GM12878 (cell line): ENCODE measurements at regions of chr12 and their contacts with region 1.

Region 1: GRCh38 chr12:26514364-26514763 is 318.6 kb downstream of the ITPR2 start:
- DNase-seq: no peak
- ATAC-seq: peak; percentile 77
- H3K4me3 ChIP-seq: no peak overlapping the region
- H3K27ac ChIP-seq: no peak overlapping the region
- H3K4me1 ChIP-seq: no peaks in the 10 kb centered on the region
- H3K27me3 ChIP-seq: no peaks in the 10 kb centered on the region
- CTCF ChIP-seq: no peak
- EP300 ChIP-seq: no peak
- POLR2A ChIP-seq: no peak
- RAD21 ChIP-seq: no peak

Region 2: DNA sequence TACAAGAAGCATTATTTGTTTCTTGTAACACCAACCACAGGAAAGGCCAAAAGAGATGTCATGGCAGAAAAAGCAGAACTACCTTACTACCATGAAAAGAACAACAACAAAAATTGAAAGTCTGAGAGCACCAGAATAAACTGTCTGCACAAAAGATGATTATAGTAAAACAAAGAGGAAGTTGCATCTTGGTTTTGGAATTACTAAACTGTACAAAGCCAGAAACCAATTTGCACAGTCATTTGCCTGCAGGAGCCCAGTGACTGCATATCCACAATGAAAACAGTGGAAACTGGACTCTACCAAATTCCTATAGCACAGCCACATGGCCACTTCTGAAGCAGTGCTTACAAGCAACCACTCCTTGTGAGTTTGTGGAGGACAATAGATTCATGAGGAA is 42.8 kb before region 1 on chr12:
- CTCF ChIA-PET with region 1: no interaction called
- POLR2A ChIA-PET with region 1: interaction called, 5 read pairs
- RAD21 ChIA-PET with region 1: no interaction called
- SMC1A ChIA-PET with region 1: interaction called, 3 read pairs
- in situ Hi-C with region 1: no loop called
- intact Hi-C with region 1: loop called (anchors 2 kb)
- DNase-seq: peak; percentile 82
- ATAC-seq: peak; percentile 84
- H3K4me3 ChIP-seq: peak overlapping the region; percentile 32; the same call in 1 of the 2 replicates
- H3K27ac ChIP-seq: peak overlapping the region; percentile 27; the same call in 1 of the 2 replicates
- H3K4me1 ChIP-seq: peaks cover 35% of the 10 kb centered on the region
- H3K27me3 ChIP-seq: no peaks in the 10 kb centered on the region
- CTCF ChIP-seq: peak in 1 of 3 experiments; percentile 21; a peak in 1 of 6 replicates
- EP300 ChIP-seq: peak; percentile 82 to 87; a peak in 3 of 4 replicates
- POLR2A ChIP-seq: no peak
- RAD21 ChIP-seq: peak; percentile 36; the same call in 1 of the 2 replicates